CD14-positive monocyte (primary cell): ENCODE measurements at regions of chrX and their contacts with region 1.

Region 1: DNA sequence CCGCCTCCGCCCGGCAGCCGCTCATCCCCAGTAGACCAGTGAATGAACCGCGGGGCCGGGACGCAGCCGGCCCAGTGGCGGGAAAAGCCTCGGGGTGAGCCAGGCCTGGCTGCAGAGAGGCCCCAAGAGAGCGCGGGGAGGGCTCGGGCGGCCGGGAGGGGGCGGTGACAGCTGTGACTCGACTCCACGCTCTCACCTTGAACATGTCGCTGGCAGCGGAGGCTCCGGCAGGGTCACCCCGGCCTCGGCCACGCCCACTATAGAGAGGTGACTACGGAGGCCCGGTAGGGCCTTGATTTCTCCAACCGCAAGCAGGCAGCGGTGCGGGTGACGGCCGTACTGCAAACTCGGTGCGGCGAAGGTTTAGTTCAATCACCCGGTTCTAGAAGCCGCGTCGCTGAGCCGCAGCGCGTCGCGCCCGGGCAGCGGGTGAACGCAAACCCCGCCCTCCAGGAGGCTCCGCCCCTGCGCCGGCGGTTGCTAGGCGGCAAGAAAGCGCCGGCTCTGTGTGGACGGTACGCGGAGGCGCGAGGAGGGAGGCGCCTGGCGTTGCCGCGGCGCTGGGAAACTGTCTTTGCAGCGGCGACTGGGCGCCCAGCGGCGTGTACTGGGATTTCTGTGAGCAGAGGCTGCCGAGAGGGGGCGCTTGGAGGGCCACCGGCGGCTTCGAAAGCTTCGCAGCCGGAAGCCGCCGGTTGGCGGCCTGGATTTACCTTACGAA is at the starts of genes APOO and CXorf58:
- DNase-seq: peak; percentile 88 to 91 (median 90)
- H3K4me3 ChIP-seq: peak within 1 kb of the TSS; percentile 42 to 73 (median 54)
- H3K4me3 Mint-ChIP-seq: peak within 1 kb of the TSS; percentile 77 to 83
- H3K27ac ChIP-seq: peak within 1 kb of the TSS; percentile 71 to 86
- H3K27ac Mint-ChIP-seq: peak within 1 kb of the TSS; percentile 81 to 94 (median 91)
- H3K4me1 ChIP-seq: peaks cover 35 to 36% of the 10 kb centered on the region in 2 donors
- H3K4me1 Mint-ChIP-seq: peaks cover 25% of the 10 kb centered on the region
- H3K27me3 ChIP-seq: peaks cover 0 to 3% of the 10 kb centered on the region in 2 donors
- H3K27me3 Mint-ChIP-seq: peaks cover 0 to 27% (median 0%) of the 10 kb centered on the region in 3 donors
- CTCF ChIP-seq: peak; percentile 73
- polyA plus RNA-seq, gene APOO: 3.3 to 8.3 (median 4.6) TPM
- polyA plus RNA-seq, gene CXorf58: not detected

Region 2: GRCh38 chrX:23694606-23695005 is 213.1 kb before region 1 on chrX:
- intact Hi-C with region 1: loop called (anchors 2 to 10 kb)
- DNase-seq: peak; percentile 28 to 48 (median 35)
- H3K4me3 ChIP-seq: no peak overlapping the region
- H3K4me3 Mint-ChIP-seq: no peak overlapping the region
- H3K27ac ChIP-seq: no peak overlapping the region
- H3K27ac Mint-ChIP-seq: no peak overlapping the region
- H3K4me1 ChIP-seq: peaks cover 2 to 3% of the 10 kb centered on the region in 2 donors
- H3K4me1 Mint-ChIP-seq: peaks cover 4% of the 10 kb centered on the region
- H3K27me3 ChIP-seq: no peaks in the 10 kb centered on the region
- H3K27me3 Mint-ChIP-seq: peaks cover 0 to 12% (median 0%) of the 10 kb centered on the region in 3 donors
- CTCF ChIP-seq: peak; percentile 54

Region 3: DNA sequence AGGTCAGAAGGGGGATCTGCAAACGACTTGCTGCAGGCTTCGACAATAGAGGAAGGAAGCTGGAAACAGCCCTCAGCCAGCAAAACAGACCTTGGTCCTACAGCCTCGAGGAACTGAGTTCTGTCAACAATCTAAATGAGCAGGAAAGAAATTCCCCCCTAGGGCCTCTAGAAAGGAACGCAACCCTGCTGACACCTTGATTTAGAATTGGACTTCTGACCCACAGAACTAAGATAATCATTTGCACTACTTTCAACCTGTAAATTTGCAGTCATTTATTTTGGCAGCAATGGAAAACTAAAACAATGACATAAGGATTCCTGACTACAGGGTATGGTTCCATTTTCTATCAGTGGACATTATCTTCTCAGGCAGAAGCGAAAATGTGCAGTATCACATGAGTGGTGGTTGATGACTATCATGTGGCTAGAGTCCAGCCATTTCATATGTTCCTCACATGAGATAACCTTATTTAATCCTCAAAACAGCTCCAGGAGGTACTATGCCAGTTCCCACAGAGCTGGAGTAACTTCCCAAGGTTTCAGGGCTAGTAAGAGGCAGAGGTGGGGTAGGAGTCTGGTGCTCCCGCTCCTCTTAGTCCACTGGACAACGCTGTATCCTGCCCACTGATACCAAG is 63.0 kb before region 1 on chrX:
- intact Hi-C with region 1: loop called in 1 of 2 experiments (anchors 10 kb)
- DNase-seq: peak; percentile 27 to 58 (median 41)
- H3K4me3 ChIP-seq: peak overlapping the region in 1 of 3 experiments; percentile 25
- H3K4me3 Mint-ChIP-seq: peak overlapping the region; percentile 31 to 42
- H3K27ac ChIP-seq: peak overlapping the region; percentile 82 to 86
- H3K27ac Mint-ChIP-seq: peak overlapping the region; percentile 64 to 92 (median 83)
- H3K4me1 ChIP-seq: peaks cover 41 to 43% of the 10 kb centered on the region in 2 donors
- H3K4me1 Mint-ChIP-seq: peaks cover 36% of the 10 kb centered on the region
- H3K27me3 ChIP-seq: peaks cover 0 to 2% of the 10 kb centered on the region in 2 donors
- H3K27me3 Mint-ChIP-seq: peaks cover 0 to 22% (median 0%) of the 10 kb centered on the region in 3 donors
- CTCF ChIP-seq: no peak

Region 4: DNA sequence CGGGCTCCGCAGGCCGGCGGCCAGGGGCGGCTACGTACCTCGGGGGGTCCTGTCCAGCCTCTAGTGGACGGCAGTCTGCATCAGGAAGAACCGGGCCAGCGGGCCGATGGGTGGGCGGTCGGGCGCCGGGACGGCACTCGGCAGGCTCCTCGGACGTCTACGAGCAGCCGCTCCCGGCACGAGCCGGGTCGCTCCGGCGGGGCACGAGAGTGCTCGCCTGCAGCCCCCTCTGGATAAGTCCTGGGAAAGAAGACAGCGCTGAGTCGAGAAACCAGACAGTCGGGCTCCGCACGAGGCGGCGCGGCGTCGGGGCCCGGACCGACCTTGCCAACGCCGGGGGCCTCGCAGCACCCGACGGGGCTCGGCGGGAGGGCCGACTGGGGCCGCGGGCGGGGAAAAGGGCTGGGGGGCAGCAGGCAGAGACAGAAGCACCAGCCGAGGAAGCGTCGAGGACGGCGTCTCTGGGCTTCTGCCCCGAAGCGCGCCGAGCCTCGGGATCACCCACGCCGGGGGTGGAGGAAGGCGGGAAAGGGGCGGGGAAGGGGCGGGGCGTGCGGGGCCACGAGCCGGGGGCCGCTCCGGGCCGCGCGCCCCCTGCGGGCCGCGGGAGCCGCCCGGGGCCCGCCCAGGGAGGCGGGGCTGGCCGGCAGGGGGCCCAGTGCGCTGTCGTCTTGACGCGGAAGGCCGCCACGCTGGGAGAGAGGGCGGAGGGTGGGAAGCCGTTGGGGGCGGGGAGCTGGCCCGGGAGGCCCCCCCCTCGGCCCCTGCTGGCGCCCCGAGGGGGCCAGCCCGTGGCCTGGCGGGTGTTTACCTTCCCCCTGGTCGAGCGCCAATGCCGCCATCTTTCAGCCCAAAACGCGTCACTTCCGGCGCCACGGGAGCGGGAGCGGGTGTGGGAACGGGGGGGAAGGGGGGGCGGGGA is 117.4 kb after region 1 on chrX:
- intact Hi-C with region 1: loop called (anchors 2 to 10 kb)
- DNase-seq: peak; percentile 59 to 84 (median 75)
- H3K4me3 ChIP-seq: peak overlapping the region; percentile 70 to 99 (median 81)
- H3K4me3 Mint-ChIP-seq: peak overlapping the region; percentile 79 to 84
- H3K27ac ChIP-seq: peak overlapping the region; percentile 90 to 92
- H3K27ac Mint-ChIP-seq: peak overlapping the region in 5 of 7 donors; percentile 11 to 93 (median 83)
- H3K4me1 ChIP-seq: peaks cover 0 to 4% of the 10 kb centered on the region in 2 donors
- H3K4me1 Mint-ChIP-seq: peaks cover 21% of the 10 kb centered on the region
- H3K27me3 ChIP-seq: peaks cover 0 to 36% of the 10 kb centered on the region in 2 donors
- H3K27me3 Mint-ChIP-seq: peaks cover 0 to 55% (median 0%) of the 10 kb centered on the region in 3 donors
- CTCF ChIP-seq: no peak

Region 5: DNA sequence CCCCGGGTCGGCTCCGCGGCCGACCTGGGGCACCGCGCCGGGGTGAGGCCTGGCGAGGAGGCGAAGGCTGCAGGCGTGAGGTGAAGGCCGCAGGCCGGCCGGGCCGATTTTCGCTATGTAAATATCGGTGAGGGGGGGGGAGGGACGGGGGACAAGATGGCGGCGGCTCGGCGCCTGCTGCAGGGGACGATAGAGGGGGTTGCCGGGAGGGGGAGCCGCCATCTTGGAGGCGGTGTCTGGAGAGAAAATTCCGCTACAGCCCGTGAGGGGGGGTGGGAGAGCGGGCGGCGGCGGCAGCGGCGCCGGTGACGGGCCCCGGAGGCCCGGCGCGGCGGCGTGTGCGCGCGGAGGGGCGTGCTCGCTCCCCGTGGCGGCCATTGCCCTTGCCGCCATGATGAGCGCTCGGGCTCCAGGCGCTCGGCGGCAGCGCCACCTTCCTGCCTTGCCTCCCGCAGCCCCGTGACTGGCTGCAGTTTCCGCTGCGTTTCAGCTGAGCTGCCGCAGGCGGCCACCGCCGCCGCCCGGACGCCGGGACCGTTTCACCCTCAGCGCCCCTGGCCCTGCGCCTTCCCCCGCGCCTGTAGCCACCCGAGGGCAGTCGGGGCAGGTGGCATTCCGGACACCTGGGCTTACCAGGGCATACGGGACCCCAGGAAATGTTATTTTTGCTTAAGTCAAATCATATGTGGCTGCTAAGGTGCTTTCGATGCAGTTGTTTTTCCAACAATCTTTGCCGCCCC is 242.6 kb after region 1 on chrX:
- intact Hi-C with region 1: loop called in 1 of 2 experiments (anchors 5 kb)
- DNase-seq: peak; percentile 74 to 94 (median 88)
- H3K4me3 ChIP-seq: peak overlapping the region; percentile 70 to 94 (median 85)
- H3K4me3 Mint-ChIP-seq: peak overlapping the region; percentile 79 to 89
- H3K27ac ChIP-seq: peak overlapping the region; percentile 83 to 87
- H3K27ac Mint-ChIP-seq: peak overlapping the region; percentile 84 to 94 (median 90)
- H3K4me1 ChIP-seq: peaks cover 23 to 55% of the 10 kb centered on the region in 2 donors
- H3K4me1 Mint-ChIP-seq: peaks cover 39% of the 10 kb centered on the region
- H3K27me3 ChIP-seq: no peaks in the 10 kb centered on the region
- H3K27me3 Mint-ChIP-seq: no peaks in the 10 kb centered on the region
- CTCF ChIP-seq: peak; percentile 26